Naive thymus-derived CD4-positive, alpha-beta T cell (primary cell): ENCODE measurements at regions of chr15 and their contacts with region 1.

Region 1: GRCh38 chr15:85014932-85015331 is 33.3 kb downstream of the PDE8A start:
- DNase-seq: no peak
- ATAC-seq: no peak
- H3K4me3 ChIP-seq: no peak overlapping the region
- H3K4me3 Mint-ChIP-seq: no peak overlapping the region
- H3K27ac ChIP-seq: no peak overlapping the region
- H3K27ac Mint-ChIP-seq: peak overlapping the region in 1 of 9 donors; percentile 51
- H3K4me1 ChIP-seq: no peaks in the 10 kb centered on the region
- H3K4me1 Mint-ChIP-seq: peaks cover 1 to 53% (median 40%) of the 10 kb centered on the region in 7 donors
- H3K27me3 ChIP-seq: no peaks in the 10 kb centered on the region
- H3K27me3 Mint-ChIP-seq: no peaks in the 10 kb centered on the region

Region 2: GRCh38 chr15:84398763-84399701 is 615.9 kb before region 1 on chr15:
- CTCF ChIA-PET with region 1: no interaction called
- POLR2A ChIA-PET with region 1: no interaction called
- intact Hi-C with region 1: no loop called
- DNase-seq: no peak
- ATAC-seq: peak; percentile 16
- H3K4me3 ChIP-seq: no peak overlapping the region
- H3K4me3 Mint-ChIP-seq: no peak overlapping the region
- H3K27ac ChIP-seq: no peak overlapping the region
- H3K27ac Mint-ChIP-seq: no peak overlapping the region
- H3K4me1 ChIP-seq: no peaks in the 10 kb centered on the region
- H3K4me1 Mint-ChIP-seq: no peaks in the 10 kb centered on the region
- H3K27me3 ChIP-seq: no peaks in the 10 kb centered on the region
- H3K27me3 Mint-ChIP-seq: peaks cover 0 to 7% (median 0%) of the 10 kb centered on the region in 5 donors

Region 3: GRCh38 chr15:85030301-85031049 is 15.5 kb after region 1 on chr15:
- CTCF ChIA-PET with region 1: no interaction called
- POLR2A ChIA-PET with region 1: no interaction called
- intact Hi-C with region 1: loop called in 1 of 2 experiments (anchors 2 kb)
- DNase-seq: no peak
- ATAC-seq: peak; percentile 37
- H3K4me3 ChIP-seq: no peak overlapping the region
- H3K4me3 Mint-ChIP-seq: peak overlapping the region in 8 of 10 donors; percentile 3 to 44 (median 32)
- H3K27ac ChIP-seq: no peak overlapping the region
- H3K27ac Mint-ChIP-seq: peak overlapping the region in 7 of 9 donors; percentile 0 to 79 (median 49)
- H3K4me1 ChIP-seq: peaks cover 15 to 25% of the 10 kb centered on the region in 2 donors
- H3K4me1 Mint-ChIP-seq: peaks cover 44 to 70% (median 61%) of the 10 kb centered on the region in 7 donors
- H3K27me3 ChIP-seq: no peaks in the 10 kb centered on the region
- H3K27me3 Mint-ChIP-seq: no peaks in the 10 kb centered on the region

Region 4: GRCh38 chr15:85116925-85117680 is 102.2 kb after region 1 on chr15:
- CTCF ChIA-PET with region 1: no interaction called
- POLR2A ChIA-PET with region 1: no interaction called
- intact Hi-C with region 1: no loop called
- DNase-seq: peak in 1 of 9 donors; percentile 23
- ATAC-seq: no peak
- H3K4me3 ChIP-seq: no peak overlapping the region
- H3K4me3 Mint-ChIP-seq: no peak overlapping the region
- H3K27ac ChIP-seq: no peak overlapping the region
- H3K27ac Mint-ChIP-seq: peak overlapping the region in 1 of 9 donors; percentile 47
- H3K4me1 ChIP-seq: no peaks in the 10 kb centered on the region
- H3K4me1 Mint-ChIP-seq: no peaks in the 10 kb centered on the region
- H3K27me3 ChIP-seq: no peaks in the 10 kb centered on the region
- H3K27me3 Mint-ChIP-seq: no peaks in the 10 kb centered on the region